ENCODE measurements at regions of chr12 and their contacts with region 1.

Region 1: GRCh38 chr12:122471324-122472226 is 29.2 kb downstream of the ZCCHC8 start:
- DNase-seq: no peak
- ATAC-seq: peak; percentile 69
- H3K4me3 ChIP-seq: no peak overlapping the region
- H3K27ac ChIP-seq: no peak overlapping the region
- H3K4me1 ChIP-seq: peaks cover 24% of the 10 kb centered on the region
- H3K27me3 ChIP-seq: no peaks in the 10 kb centered on the region
- CTCF ChIP-seq: peak; percentile 63 to 71 (median 70); a peak in 5 of 6 replicates
- EP300 ChIP-seq: no peak
- POLR2A ChIP-seq: no peak
- RAD21 ChIP-seq: peak; percentile 83

Region 2: GRCh38 chr12:122166422-122167349 is 304.9 kb before region 1 on chr12:
- CTCF ChIA-PET with region 1: no interaction called
- POLR2A ChIA-PET with region 1: no interaction called
- RAD21 ChIA-PET with region 1: no interaction called
- SMC1A ChIA-PET with region 1: no interaction called
- in situ Hi-C with region 1: no loop called
- intact Hi-C with region 1: no loop called
- DNase-seq: peak; percentile 9
- ATAC-seq: peak; percentile 97
- H3K4me3 ChIP-seq: peak overlapping the region; percentile 21; the same call in 1 of the 2 replicates
- H3K27ac ChIP-seq: peak overlapping the region; percentile 32
- H3K4me1 ChIP-seq: peaks cover 31% of the 10 kb centered on the region
- H3K27me3 ChIP-seq: no peaks in the 10 kb centered on the region
- CTCF ChIP-seq: no peak
- EP300 ChIP-seq: peak in 1 of 2 experiments; percentile 1; a peak in 1 of 4 replicates
- POLR2A ChIP-seq: no peak
- RAD21 ChIP-seq: 0 out of 2 replicates have a peak, but pooled peaks have one; percentile 2

Region 3: GRCh38 chr12:122345042-122345441 is 126.5 kb before region 1 on chr12:
- CTCF ChIA-PET with region 1: no interaction called
- POLR2A ChIA-PET with region 1: no interaction called
- RAD21 ChIA-PET with region 1: no interaction called
- SMC1A ChIA-PET with region 1: no interaction called
- in situ Hi-C with region 1: no loop called
- intact Hi-C with region 1: no loop called
- DNase-seq: no peak
- ATAC-seq: no peak
- H3K4me3 ChIP-seq: no peak overlapping the region
- H3K27ac ChIP-seq: no peak overlapping the region
- H3K4me1 ChIP-seq: no peaks in the 10 kb centered on the region
- H3K27me3 ChIP-seq: no peaks in the 10 kb centered on the region
- CTCF ChIP-seq: no peak
- EP300 ChIP-seq: no peak
- POLR2A ChIP-seq: no peak
- RAD21 ChIP-seq: no peak

Region 4: DNA sequence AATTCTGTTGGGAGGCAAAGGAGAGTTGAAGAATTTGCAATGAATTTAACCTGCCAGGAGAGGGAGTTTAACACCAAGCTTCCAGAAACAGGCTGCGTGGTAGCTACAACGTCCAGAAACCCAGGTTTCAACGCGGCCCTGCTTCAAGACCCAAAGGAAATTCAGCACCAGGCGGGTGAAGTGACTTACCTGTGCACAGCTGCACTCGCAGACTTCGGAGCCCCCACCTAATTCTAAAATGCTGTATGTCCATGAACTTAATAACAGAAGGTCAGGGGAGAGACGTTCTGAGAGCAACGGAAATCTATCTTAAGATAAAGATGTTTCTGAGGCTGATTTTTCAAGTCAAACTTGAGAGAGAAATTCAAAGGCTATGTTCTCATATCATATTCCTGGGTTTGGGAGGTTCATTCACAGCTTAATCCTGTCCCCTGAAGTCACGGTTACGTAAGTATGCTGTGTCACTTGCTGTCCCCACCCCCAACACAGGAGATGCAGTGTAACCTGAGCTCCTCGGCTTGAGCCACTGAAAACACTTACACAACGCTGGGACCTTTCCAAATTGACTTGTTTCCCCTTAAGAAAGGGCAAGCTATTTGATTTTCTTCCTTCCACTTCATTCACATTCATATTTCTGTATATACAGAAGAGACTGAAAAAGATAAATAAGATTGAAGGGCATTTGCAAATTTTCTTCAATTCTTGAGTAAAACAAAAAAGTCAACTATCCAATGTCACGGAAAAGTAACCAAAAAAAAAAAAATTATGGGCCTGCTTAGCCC is 71.8 kb before region 1 on chr12:
- CTCF ChIA-PET with region 1: interaction called, 246 read pairs
- POLR2A ChIA-PET with region 1: interaction called, 3 read pairs
- RAD21 ChIA-PET with region 1: interaction called, 113 read pairs
- SMC1A ChIA-PET with region 1: interaction called, 147 read pairs
- in situ Hi-C with region 1: no loop called
- intact Hi-C with region 1: loop called (anchors 1 kb)
- DNase-seq: no peak
- ATAC-seq: peak; percentile 75
- H3K4me3 ChIP-seq: no peak overlapping the region
- H3K27ac ChIP-seq: peak overlapping the region; percentile 78
- H3K4me1 ChIP-seq: peaks cover 38% of the 10 kb centered on the region
- H3K27me3 ChIP-seq: no peaks in the 10 kb centered on the region
- CTCF ChIP-seq: peak; percentile 57 to 81 (median 76); a peak in 5 of 6 replicates
- EP300 ChIP-seq: no peak
- POLR2A ChIP-seq: no peak
- RAD21 ChIP-seq: peak; percentile 98

Region 5: DNA sequence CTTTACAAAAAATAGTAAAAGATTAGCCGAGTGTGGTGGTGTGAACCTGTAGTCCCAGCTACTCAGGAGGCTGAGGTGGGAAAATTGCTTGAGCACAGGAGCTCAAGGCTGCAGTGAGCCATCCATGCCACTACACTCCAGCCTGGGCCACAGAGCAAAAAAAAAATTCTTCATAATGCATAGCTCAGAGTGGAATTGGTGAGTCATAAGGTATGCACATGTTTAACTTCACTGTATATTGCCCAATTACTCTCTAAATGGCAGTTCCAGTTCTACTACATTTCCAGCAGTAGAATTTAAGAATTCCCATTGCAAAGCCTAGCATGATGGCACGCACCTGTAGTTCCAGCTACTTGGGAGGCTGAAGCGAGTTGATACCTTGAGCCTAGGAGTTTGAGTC is 22.2 kb before region 1 on chr12:
- CTCF ChIA-PET with region 1: interaction called, 27 read pairs
- POLR2A ChIA-PET with region 1: no interaction called
- RAD21 ChIA-PET with region 1: no interaction called
- SMC1A ChIA-PET with region 1: interaction called, 4 read pairs
- in situ Hi-C with region 1: no loop called
- intact Hi-C with region 1: no loop called
- DNase-seq: no peak
- ATAC-seq: no peak
- H3K4me3 ChIP-seq: no peak overlapping the region
- H3K27ac ChIP-seq: no peak overlapping the region
- H3K4me1 ChIP-seq: peaks cover 14% of the 10 kb centered on the region
- H3K27me3 ChIP-seq: no peaks in the 10 kb centered on the region
- CTCF ChIP-seq: no peak
- EP300 ChIP-seq: no peak
- POLR2A ChIP-seq: no peak
- RAD21 ChIP-seq: no peak

Region 6: GRCh38 chr12:122483969-122484368 is 12.4 kb after region 1 on chr12:
- CTCF ChIA-PET with region 1: interaction called, 13 read pairs
- POLR2A ChIA-PET with region 1: interaction called, 3 read pairs
- RAD21 ChIA-PET with region 1: no interaction called
- SMC1A ChIA-PET with region 1: interaction called, 3 read pairs
- in situ Hi-C with region 1: no loop called
- intact Hi-C with region 1: no loop called
- DNase-seq: no peak
- ATAC-seq: no peak
- H3K4me3 ChIP-seq: no peak overlapping the region
- H3K27ac ChIP-seq: no peak overlapping the region
- H3K4me1 ChIP-seq: no peaks in the 10 kb centered on the region
- H3K27me3 ChIP-seq: no peaks in the 10 kb centered on the region
- CTCF ChIP-seq: no peak
- EP300 ChIP-seq: no peak
- POLR2A ChIP-seq: no peak
- RAD21 ChIP-seq: no peak

Region 7: GRCh38 chr12:122519418-122519817 is 47.8 kb after region 1 on chr12:
- CTCF ChIA-PET with region 1: interaction called, 5 read pairs
- POLR2A ChIA-PET with region 1: interaction called, 3 read pairs
- RAD21 ChIA-PET with region 1: no interaction called
- SMC1A ChIA-PET with region 1: interaction called, 3 read pairs
- in situ Hi-C with region 1: no loop called
- intact Hi-C with region 1: loop called (anchors 1 kb)
- DNase-seq: no peak
- ATAC-seq: peak; percentile 22
- H3K4me3 ChIP-seq: no peak overlapping the region
- H3K27ac ChIP-seq: no peak overlapping the region
- H3K4me1 ChIP-seq: peaks cover 13% of the 10 kb centered on the region
- H3K27me3 ChIP-seq: no peaks in the 10 kb centered on the region
- CTCF ChIP-seq: no peak
- EP300 ChIP-seq: no peak
- POLR2A ChIP-seq: no peak
- RAD21 ChIP-seq: no peak